Posterior vena cava (tissue), 2 donors: ENCODE measurements at regions of chr6 and their contacts with region 1.

Region 1: GRCh38 chr6:136051140-136051775 is 198.9 kb downstream of the MTFR2 start:
- DNase-seq: no peak

Region 2: GRCh38 chr6:134853111-134854055 is 1197.9 kb before region 1 on chr6:
- intact Hi-C with region 1: no loop called
- DNase-seq: no peak

Region 3: GRCh38 chr6:136014454-136015421 is 36.5 kb before region 1 on chr6:
- intact Hi-C with region 1: no loop called
- DNase-seq: no peak

Region 4: GRCh38 chr6:136429264-136430065 is 378.2 kb after region 1 on chr6:
- intact Hi-C with region 1: loop called in 1 of 2 experiments (anchors 5 kb)
- DNase-seq: no peak